Natural killer cell (primary cell): ENCODE measurements at regions of chr12 and their contacts with region 1.

Region 1: DNA sequence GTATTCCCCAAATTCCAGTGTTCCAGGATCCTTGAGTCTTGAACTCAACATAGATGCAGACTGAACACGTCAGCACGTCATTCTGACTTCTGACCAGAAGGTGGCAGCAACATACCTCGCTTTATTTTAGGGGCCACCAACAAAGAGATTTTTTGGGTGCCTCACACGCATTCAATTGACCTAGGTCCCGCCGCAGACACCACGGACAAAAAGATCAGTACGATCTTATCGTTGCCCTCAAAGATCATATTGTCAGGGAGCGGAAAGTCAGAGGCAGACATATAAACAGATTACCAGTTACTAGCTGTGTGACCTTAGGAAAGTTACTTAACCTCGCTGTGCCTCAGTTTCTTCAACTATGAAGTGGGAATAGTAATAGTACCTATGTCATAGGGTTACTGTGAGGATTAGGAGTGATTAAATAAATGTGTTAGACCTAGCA is 6.5 kb upstream of the PRPH start:
- DNase-seq: peak; percentile 59 to 87
- ATAC-seq: peak; percentile 67 to 85 (median 83)
- H3K4me3 ChIP-seq: no peak overlapping the region
- H3K4me3 Mint-ChIP-seq: no peak overlapping the region
- H3K27ac ChIP-seq: no peak overlapping the region
- H3K27ac Mint-ChIP-seq: no peak overlapping the region
- H3K4me1 ChIP-seq: no peaks in the 10 kb centered on the region
- H3K4me1 Mint-ChIP-seq: peaks cover 0 to 4% of the 10 kb centered on the region in 2 donors
- H3K27me3 ChIP-seq: peaks cover 8% of the 10 kb centered on the region
- H3K27me3 Mint-ChIP-seq: peaks cover 39 to 44% of the 10 kb centered on the region in 2 donors
- CTCF ChIP-seq: peak; percentile 95

Region 2: GRCh38 chr12:49342066-49342913 is 53.9 kb after region 1 on chr12:
- intact Hi-C with region 1: loop called (anchors 1 kb)
- DNase-seq: peak; percentile 62 to 85
- ATAC-seq: peak; percentile 73 to 79 (median 78)
- H3K4me3 ChIP-seq: peak overlapping the region; percentile 12
- H3K4me3 Mint-ChIP-seq: peak overlapping the region; percentile 74
- H3K27ac ChIP-seq: no peak overlapping the region
- H3K27ac Mint-ChIP-seq: peak overlapping the region in 1 of 2 donors; percentile 22
- H3K4me1 ChIP-seq: peaks cover 60% of the 10 kb centered on the region
- H3K4me1 Mint-ChIP-seq: peaks cover 22 to 39% of the 10 kb centered on the region in 2 donors
- H3K27me3 ChIP-seq: peaks cover 53% of the 10 kb centered on the region
- H3K27me3 Mint-ChIP-seq: peaks cover 46 to 69% of the 10 kb centered on the region in 2 donors
- CTCF ChIP-seq: peak; percentile 92

Region 3: GRCh38 chr12:49515266-49515665 is 226.8 kb after region 1 on chr12:
- intact Hi-C with region 1: loop called (anchors 1 kb)
- DNase-seq: no peak
- ATAC-seq: no peak
- H3K4me3 ChIP-seq: no peak overlapping the region
- H3K4me3 Mint-ChIP-seq: no peak overlapping the region
- H3K27ac ChIP-seq: no peak overlapping the region
- H3K27ac Mint-ChIP-seq: no peak overlapping the region
- H3K4me1 ChIP-seq: no peaks in the 10 kb centered on the region
- H3K4me1 Mint-ChIP-seq: no peaks in the 10 kb centered on the region
- H3K27me3 ChIP-seq: no peaks in the 10 kb centered on the region
- H3K27me3 Mint-ChIP-seq: no peaks in the 10 kb centered on the region
- CTCF ChIP-seq: no peak